ENCODE measurements at regions of chr3 and their contacts with region 1.

Region 1: DNA sequence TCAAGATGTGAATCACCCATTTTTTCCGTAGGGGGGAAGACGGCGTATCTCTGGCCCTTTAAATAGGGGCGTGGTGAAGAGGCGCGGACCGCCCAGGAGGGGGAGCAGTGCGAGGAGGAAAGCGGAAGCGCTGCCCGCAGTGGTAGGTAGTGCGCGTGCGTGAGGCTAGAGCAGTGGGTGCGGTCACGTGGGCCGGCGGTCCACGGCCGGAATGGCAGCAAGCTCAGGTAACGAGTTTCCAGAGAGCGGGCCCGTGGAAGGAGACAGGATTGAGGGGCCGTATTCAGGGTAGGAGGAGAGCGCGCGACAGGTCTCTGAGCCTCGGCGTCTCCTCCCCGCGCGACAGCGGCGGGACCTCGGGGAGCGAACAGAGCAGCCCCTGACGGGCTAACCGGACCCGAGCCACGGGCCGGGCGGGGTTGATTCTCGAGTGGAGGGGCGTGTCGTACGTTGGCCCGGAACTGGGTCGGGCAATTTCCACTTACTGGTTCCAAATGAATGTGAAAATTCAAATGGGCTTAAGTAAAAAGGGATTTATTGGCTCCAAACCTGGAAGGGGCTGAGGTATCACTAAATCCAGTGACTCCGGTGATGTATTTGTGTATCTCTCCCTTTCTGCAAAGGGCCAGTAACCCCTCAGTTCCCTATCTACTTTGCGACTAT is at the start of gene VPS8:
- DNase-seq: peak; percentile 92 to 97 (median 96)
- ATAC-seq: peak; percentile 97
- H3K4me3 ChIP-seq: peak within 1 kb of the TSS; percentile 94
- H3K4me3 Mint-ChIP-seq: peak within 1 kb of the TSS; percentile 87 to 99 (median 96)
- H3K27ac ChIP-seq: peak within 1 kb of the TSS; percentile 88
- H3K27ac Mint-ChIP-seq: peak within 1 kb of the TSS; percentile 93 to 98 (median 97)
- H3K4me1 ChIP-seq: peaks cover 15 to 44% of the 10 kb centered on the region in 2 donors
- H3K4me1 Mint-ChIP-seq: peaks cover 27 to 59% (median 57%) of the 10 kb centered on the region in 7 donors
- H3K27me3 ChIP-seq: no peaks in the 10 kb centered on the region
- H3K27me3 Mint-ChIP-seq: peaks cover 0 to 4% (median 0%) of the 10 kb centered on the region in 5 donors
- total RNA-seq, gene VPS8: 77.9 to 119 (median 106) TPM

Region 2: DNA sequence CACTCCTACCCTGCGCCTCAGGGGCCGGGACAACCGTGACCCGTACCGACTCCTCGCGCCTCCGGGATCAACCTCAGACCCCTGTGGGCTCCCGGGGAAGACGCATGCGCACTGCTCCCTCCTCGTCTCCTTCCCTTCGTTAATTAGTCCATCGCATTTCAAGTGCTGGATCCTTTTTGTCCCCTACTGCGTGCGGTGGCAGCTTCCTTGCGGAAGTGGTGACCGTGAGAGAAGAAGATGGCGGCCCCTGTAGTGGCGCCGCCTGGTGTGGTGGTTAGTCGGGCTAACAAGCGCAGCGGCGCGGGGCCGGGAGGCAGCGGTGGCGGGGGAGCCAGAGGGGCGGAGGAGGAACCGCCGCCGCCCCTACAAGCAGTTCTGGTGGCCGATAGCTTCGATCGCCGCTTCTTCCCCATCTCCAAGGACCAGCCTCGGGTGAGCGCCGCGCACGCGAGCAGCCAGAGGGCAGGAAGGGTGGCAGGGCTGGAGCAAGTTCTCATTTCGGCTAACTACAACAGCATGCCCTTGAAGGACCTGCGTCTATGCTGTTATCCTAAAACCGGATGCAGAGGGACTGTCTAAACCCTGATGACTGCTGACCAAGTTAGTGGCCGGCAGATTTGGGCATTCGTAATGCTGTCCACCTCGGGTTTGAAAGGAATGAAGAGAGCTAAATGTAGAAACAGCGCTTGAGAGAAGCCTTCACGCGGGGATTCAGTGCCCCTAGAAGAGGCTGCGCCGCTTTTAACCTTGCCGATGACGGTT is 676.8 kb before region 1 on chr3 and contains the start of gene EIF2B5:
- CTCF ChIA-PET with region 1: no interaction called
- POLR2A ChIA-PET with region 1: no interaction called
- intact Hi-C with region 1: loop called in 1 of 2 experiments (anchors 2 kb)
- DNase-seq: peak; percentile 63 to 87 (median 84)
- ATAC-seq: peak; percentile 96
- H3K4me3 ChIP-seq: peak within 1 kb of the TSS; percentile 83
- H3K4me3 Mint-ChIP-seq: peak within 1 kb of the TSS; percentile 96 to 100 (median 98)
- H3K27ac ChIP-seq: peak within 1 kb of the TSS; percentile 86
- H3K27ac Mint-ChIP-seq: peak within 1 kb of the TSS; percentile 92 to 98 (median 97)
- H3K4me1 ChIP-seq: peaks cover 4 to 10% of the 10 kb centered on the region in 2 donors
- H3K4me1 Mint-ChIP-seq: peaks cover 29 to 40% (median 38%) of the 10 kb centered on the region in 7 donors
- H3K27me3 ChIP-seq: no peaks in the 10 kb centered on the region
- H3K27me3 Mint-ChIP-seq: peaks cover 0 to 10% (median 0%) of the 10 kb centered on the region in 5 donors
- total RNA-seq, gene EIF2B5: 47.2 to 87.2 (median 67.7) TPM

Region 3: GRCh38 chr3:184298759-184299496 is 513.2 kb before region 1 on chr3 and contains the start of gene PSMD2:
- CTCF ChIA-PET with region 1: no interaction called
- POLR2A ChIA-PET with region 1: no interaction called
- intact Hi-C with region 1: loop called in 1 of 2 experiments (anchors 1 kb)
- DNase-seq: peak; percentile 93 to 97 (median 96)
- ATAC-seq: peak; percentile 98
- H3K4me3 ChIP-seq: peak within 1 kb of the TSS; percentile 74
- H3K4me3 Mint-ChIP-seq: peak within 1 kb of the TSS; percentile 89 to 97 (median 94)
- H3K27ac ChIP-seq: peak within 1 kb of the TSS; percentile 80
- H3K27ac Mint-ChIP-seq: peak within 1 kb of the TSS; percentile 85 to 97 (median 92)
- H3K4me1 ChIP-seq: peaks cover 12 to 15% of the 10 kb centered on the region in 2 donors
- H3K4me1 Mint-ChIP-seq: peaks cover 15 to 37% (median 25%) of the 10 kb centered on the region in 7 donors
- H3K27me3 ChIP-seq: no peaks in the 10 kb centered on the region
- H3K27me3 Mint-ChIP-seq: peaks cover 0 to 8% (median 0%) of the 10 kb centered on the region in 5 donors
- total RNA-seq, gene PSMD2: 139 to 204 (median 149) TPM

Region 4: GRCh38 chr3:184842433-184842832 is 30.3 kb after region 1 on chr3:
- CTCF ChIA-PET with region 1: no interaction called
- POLR2A ChIA-PET with region 1: no interaction called
- intact Hi-C with region 1: no loop called
- DNase-seq: no peak
- ATAC-seq: no peak
- H3K4me3 ChIP-seq: no peak overlapping the region
- H3K4me3 Mint-ChIP-seq: no peak overlapping the region
- H3K27ac ChIP-seq: no peak overlapping the region
- H3K27ac Mint-ChIP-seq: no peak overlapping the region
- H3K4me1 ChIP-seq: no peaks in the 10 kb centered on the region
- H3K4me1 Mint-ChIP-seq: peaks cover 0 to 2% (median 0%) of the 10 kb centered on the region in 7 donors
- H3K27me3 ChIP-seq: no peaks in the 10 kb centered on the region
- H3K27me3 Mint-ChIP-seq: no peaks in the 10 kb centered on the region

Region 5: DNA sequence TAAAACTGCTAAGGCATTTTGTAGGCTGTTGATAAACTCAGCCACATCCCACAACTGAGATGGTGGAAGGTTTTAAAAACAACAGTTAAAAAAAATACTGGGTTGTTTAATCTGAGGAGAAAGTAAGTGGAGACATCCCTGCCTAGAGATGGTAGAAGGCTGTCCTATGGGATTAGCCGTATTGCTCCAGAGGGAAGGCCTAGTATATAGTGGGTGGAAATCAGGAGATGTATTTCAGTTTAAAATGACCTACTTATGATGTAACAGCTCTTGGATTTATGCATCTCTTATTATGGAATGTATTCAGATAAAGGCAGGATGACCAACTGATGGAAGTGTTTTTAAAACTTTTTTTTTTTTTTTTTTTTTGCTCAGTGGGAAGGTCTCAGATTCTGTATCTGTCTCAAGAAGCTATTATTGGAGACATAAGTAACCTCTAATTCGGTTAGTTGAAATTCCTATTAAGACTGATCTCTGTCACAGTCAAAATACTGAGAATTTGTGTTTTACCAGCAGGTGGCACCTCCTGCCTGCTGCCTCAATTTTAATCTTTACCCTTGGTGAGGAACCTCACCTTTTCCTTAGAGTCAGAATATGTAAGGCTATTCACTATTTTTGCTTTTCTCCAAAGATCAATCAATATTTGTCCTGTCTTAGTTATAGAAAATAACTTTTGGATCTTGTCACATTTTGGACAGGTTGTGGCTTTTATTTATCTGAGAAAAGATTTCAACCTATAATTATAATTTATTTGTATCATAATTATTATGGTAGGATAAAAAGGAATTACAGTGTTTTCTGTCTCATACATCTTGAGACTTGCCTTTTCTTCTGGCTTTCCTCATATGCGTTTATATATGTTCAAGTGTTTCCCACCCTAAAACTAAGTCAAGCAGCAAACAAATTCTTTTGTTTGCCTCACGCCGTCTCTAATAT is 62.8 kb after region 1 on chr3:
- CTCF ChIA-PET with region 1: no interaction called
- POLR2A ChIA-PET with region 1: no interaction called
- intact Hi-C with region 1: loop called in 1 of 2 experiments (anchors 5 kb)
- DNase-seq: peak in 2 of 9 donors; percentile 2 to 4
- ATAC-seq: no peak
- H3K4me3 ChIP-seq: no peak overlapping the region
- H3K4me3 Mint-ChIP-seq: no peak overlapping the region
- H3K27ac ChIP-seq: no peak overlapping the region
- H3K27ac Mint-ChIP-seq: peak overlapping the region in 1 of 9 donors; percentile 8
- H3K4me1 ChIP-seq: no peaks in the 10 kb centered on the region
- H3K4me1 Mint-ChIP-seq: peaks cover 0 to 19% (median 1%) of the 10 kb centered on the region in 7 donors
- H3K27me3 ChIP-seq: no peaks in the 10 kb centered on the region
- H3K27me3 Mint-ChIP-seq: no peaks in the 10 kb centered on the region

Region 6: GRCh38 chr3:185585859-185586685 is 773.9 kb after region 1 on chr3 and contains the start of gene SENP2:
- CTCF ChIA-PET with region 1: no interaction called
- POLR2A ChIA-PET with region 1: no interaction called
- intact Hi-C with region 1: loop called in 1 of 2 experiments (anchors 10 kb)
- DNase-seq: peak; percentile 96 to 100 (median 100)
- ATAC-seq: peak; percentile 94
- H3K4me3 ChIP-seq: peak within 1 kb of the TSS; percentile 95
- H3K4me3 Mint-ChIP-seq: peak within 1 kb of the TSS; percentile 79 to 94 (median 87)
- H3K27ac ChIP-seq: peak within 1 kb of the TSS; percentile 95
- H3K27ac Mint-ChIP-seq: peak within 1 kb of the TSS; percentile 86 to 99 (median 95)
- H3K4me1 ChIP-seq: peaks cover 21 to 27% of the 10 kb centered on the region in 2 donors
- H3K4me1 Mint-ChIP-seq: peaks cover 24 to 40% (median 31%) of the 10 kb centered on the region in 7 donors
- H3K27me3 ChIP-seq: no peaks in the 10 kb centered on the region
- H3K27me3 Mint-ChIP-seq: peaks cover 0 to 5% (median 0%) of the 10 kb centered on the region in 5 donors
- total RNA-seq, gene SENP2: 30.0 to 59.2 (median 47.3) TPM